Psoas muscle (tissue), 8 donors: ENCODE measurements at regions of chr9 and their contacts with region 1.

Region 1: GRCh38 chr9:112921549-112921948 is 30.9 kb upstream of the SLC46A2 start:
- DNase-seq: no peak
- ATAC-seq: no peak
- H3K4me3 ChIP-seq: no peak overlapping the region
- H3K27ac ChIP-seq: no peak overlapping the region
- H3K4me1 ChIP-seq: no peaks in the 10 kb centered on the region
- H3K27me3 ChIP-seq: peaks cover 0 to 6% (median 0%) of the 10 kb centered on the region in 3 donors
- CTCF ChIP-seq: peak; percentile 20

Region 2: DNA sequence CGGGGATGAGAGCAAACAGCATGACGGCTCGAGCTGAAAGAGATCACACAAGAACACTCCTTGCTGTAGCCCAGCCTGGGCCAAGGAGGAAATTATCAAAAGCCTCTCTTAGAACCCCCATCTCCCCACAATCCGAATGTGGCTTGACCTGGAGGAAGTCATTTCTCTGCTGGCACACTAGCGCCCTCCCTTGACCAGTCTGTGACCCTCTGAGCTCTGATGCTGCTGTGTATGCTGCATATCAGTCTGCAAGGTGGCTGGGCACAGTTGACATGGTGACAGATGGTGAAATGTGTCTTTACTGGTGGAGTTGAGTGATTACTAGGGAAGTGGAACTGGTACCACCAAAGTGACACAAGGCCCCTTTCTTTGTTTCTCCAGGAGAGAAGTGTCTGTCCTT is 34.2 kb before region 1 on chr9:
- intact Hi-C with region 1: loop called in 1 of 2 experiments (anchors 1 kb)
- DNase-seq: no peak
- ATAC-seq: no peak
- H3K4me3 ChIP-seq: no peak overlapping the region
- H3K27ac ChIP-seq: no peak overlapping the region
- H3K4me1 ChIP-seq: no peaks in the 10 kb centered on the region
- H3K27me3 ChIP-seq: no peaks in the 10 kb centered on the region
- CTCF ChIP-seq: no peak

Region 3: GRCh38 chr9:113095561-113095960 is 174.0 kb after region 1 on chr9:
- intact Hi-C with region 1: loop called in 1 of 2 experiments (anchors 10 kb)
- DNase-seq: no peak
- ATAC-seq: no peak
- H3K4me3 ChIP-seq: no peak overlapping the region
- H3K27ac ChIP-seq: no peak overlapping the region
- H3K4me1 ChIP-seq: no peaks in the 10 kb centered on the region
- H3K27me3 ChIP-seq: peaks cover 8 to 55% (median 10%) of the 10 kb centered on the region in 3 donors
- CTCF ChIP-seq: no peak

Region 4: GRCh38 chr9:113150670-113151611 is 229.4 kb after region 1 on chr9 and contains the start of gene SLC31A2:
- intact Hi-C with region 1: no loop called
- DNase-seq: peak; percentile 92 to 94
- ATAC-seq: peak; percentile 89 to 96 (median 92)
- H3K4me3 ChIP-seq: peak within 1 kb of the TSS; percentile 84
- H3K27ac ChIP-seq: peak within 1 kb of the TSS; percentile 86
- H3K4me1 ChIP-seq: peaks cover 18% of the 10 kb centered on the region
- H3K27me3 ChIP-seq: no peaks in the 10 kb centered on the region
- CTCF ChIP-seq: peak; percentile 23
- total RNA-seq, gene SLC31A2: 10.0 to 21.5 (median 16.2) TPM